Heart left ventricle (tissue), 16 donors: ENCODE measurements at regions of chr1 and their contacts with region 1.

Region 1: GRCh38 chr1:168509875-168510791 is 33.7 kb downstream of the XCL2 start:
- DNase-seq: peak in 1 of 5 donors; percentile 37
- ATAC-seq: peak in 3 of 4 donors; percentile 51 to 70 (median 61)
- H3K4me3 ChIP-seq: no peak overlapping the region
- H3K27ac ChIP-seq: peak overlapping the region in 1 of 12 donors; percentile 7
- H3K4me1 ChIP-seq: peaks cover 0 to 50% (median 8%) of the 10 kb centered on the region in 12 donors
- H3K27me3 ChIP-seq: no peaks in the 10 kb centered on the region
- CTCF ChIP-seq: no peak
- POLR2A ChIP-seq: no peak

Region 2: GRCh38 chr1:168035345-168035744 is 474.8 kb before region 1 on chr1:
- intact Hi-C with region 1: no loop called
- DNase-seq: no peak
- ATAC-seq: no peak
- H3K4me3 ChIP-seq: no peak overlapping the region
- H3K27ac ChIP-seq: no peak overlapping the region
- H3K4me1 ChIP-seq: no peaks in the 10 kb centered on the region
- H3K27me3 ChIP-seq: no peaks in the 10 kb centered on the region
- CTCF ChIP-seq: no peak
- POLR2A ChIP-seq: no peak

Region 3: DNA sequence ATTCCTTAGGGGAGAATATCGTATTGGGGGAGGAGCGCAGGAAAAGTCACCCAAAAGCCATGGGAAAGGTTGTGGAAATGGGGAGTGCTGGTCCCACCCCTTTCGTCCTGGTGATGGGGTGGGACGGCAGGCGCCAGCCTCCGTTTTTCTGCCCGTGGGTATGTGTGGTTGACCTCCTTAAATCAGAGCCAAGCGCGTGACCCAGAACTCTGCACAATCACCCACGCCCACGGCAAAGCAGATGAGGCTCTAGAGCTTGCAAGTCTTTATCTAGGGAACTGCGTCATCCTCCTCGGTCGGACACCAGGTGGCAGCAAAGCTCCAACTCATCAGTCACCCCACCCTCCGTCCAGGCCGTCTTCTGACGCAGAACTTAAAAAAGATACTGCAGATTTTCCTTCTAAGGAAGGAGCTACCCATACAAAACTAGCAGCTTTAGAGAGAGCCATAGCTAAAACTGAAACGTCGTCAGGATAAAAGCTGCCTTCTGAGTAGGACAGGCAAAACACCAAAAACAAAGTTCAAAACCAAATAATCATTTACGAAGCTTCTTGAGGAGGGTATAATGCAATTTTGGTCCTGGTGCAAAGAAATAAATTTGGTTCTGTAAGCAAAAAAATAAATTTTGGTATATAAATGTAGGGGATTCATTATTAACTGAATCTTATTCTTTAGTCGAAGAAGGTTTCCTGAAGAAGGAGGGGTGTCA is 167.4 kb before region 1 on chr1:
- intact Hi-C with region 1: no loop called
- DNase-seq: peak; percentile 89 to 92 (median 90)
- ATAC-seq: peak; percentile 96 to 98 (median 98)
- H3K4me3 ChIP-seq: peak overlapping the region in 9 of 12 donors; percentile 2 to 46 (median 20)
- H3K27ac ChIP-seq: peak overlapping the region in 5 of 12 donors; percentile 2 to 76 (median 39)
- H3K4me1 ChIP-seq: peaks cover 0 to 27% (median 5%) of the 10 kb centered on the region in 12 donors
- H3K27me3 ChIP-seq: no peaks in the 10 kb centered on the region
- CTCF ChIP-seq: peak; percentile 77 to 88 (median 84)
- POLR2A ChIP-seq: no peak

Region 4: GRCh38 chr1:168945870-168946269 is 435.7 kb after region 1 on chr1:
- intact Hi-C with region 1: loop called in 1 of 10 experiments (anchors 5 kb)
- DNase-seq: peak in 4 of 5 donors; percentile 57 to 88 (median 73)
- ATAC-seq: peak; percentile 86 to 99 (median 95)
- H3K4me3 ChIP-seq: no peak overlapping the region
- H3K27ac ChIP-seq: peak overlapping the region in 10 of 12 donors; percentile 2 to 62 (median 50)
- H3K4me1 ChIP-seq: peaks cover 0 to 13% (median 11%) of the 10 kb centered on the region in 12 donors
- H3K27me3 ChIP-seq: no peaks in the 10 kb centered on the region
- CTCF ChIP-seq: no peak
- POLR2A ChIP-seq: no peak